CD4-positive, alpha-beta memory T cell (primary cell): ENCODE measurements at regions of chr1 and their contacts with region 1.

Region 1: DNA sequence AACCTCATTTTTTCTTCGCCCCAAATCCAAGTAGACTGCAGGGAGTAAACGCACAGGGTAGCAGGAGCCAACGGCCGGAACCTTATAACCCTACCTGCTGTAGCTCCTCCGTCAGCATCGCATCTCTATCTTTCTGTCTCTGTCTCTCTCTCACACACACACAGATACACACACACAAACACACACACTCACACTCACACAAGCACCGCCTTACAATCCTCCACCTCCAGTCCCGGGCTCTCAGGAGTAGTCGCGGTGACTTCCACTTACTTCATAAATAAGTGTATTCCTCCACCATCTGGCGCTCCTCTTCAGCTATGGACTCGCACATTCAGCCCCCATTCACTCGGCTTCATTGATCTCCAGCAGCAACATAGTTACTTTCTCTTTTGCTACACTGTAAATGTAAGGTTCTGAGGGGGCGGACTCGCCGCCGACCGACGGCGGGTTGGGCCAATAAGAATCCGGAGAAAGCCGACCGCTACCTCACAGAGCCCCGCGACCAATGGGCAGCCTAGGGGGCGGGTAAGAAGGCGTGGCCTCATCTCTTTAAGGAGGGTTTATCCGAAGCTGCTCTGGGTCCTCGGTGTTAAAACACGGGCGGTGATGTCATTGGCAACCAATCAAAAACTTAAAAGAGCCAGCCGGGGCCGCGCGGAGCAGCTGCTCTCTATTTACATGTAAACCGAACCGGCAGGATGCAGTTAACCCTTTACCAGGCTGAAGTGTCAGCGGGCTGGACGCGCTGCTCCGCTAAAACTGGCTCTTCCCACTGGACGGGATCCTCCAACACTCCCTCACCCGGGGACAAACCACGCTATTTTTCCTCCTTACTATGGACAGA is at the start of gene DUSP10:
- DNase-seq: peak; percentile 97 to 100 (median 100)
- H3K4me3 ChIP-seq: peak within 1 kb of the TSS; percentile 95 to 96
- H3K4me3 Mint-ChIP-seq: peak within 1 kb of the TSS in 3 of 8 donors; percentile 79 to 87 (median 86)
- H3K27ac ChIP-seq: peak within 1 kb of the TSS; percentile 98
- H3K27ac Mint-ChIP-seq: peak within 1 kb of the TSS in 4 of 7 donors; percentile 72 to 98 (median 92)
- H3K4me1 ChIP-seq: peaks cover 38% of the 10 kb centered on the region
- H3K4me1 Mint-ChIP-seq: peaks cover 0 to 36% (median 17%) of the 10 kb centered on the region in 4 donors
- H3K27me3 ChIP-seq: no peaks in the 10 kb centered on the region
- H3K27me3 Mint-ChIP-seq: no peaks in the 10 kb centered on the region
- total RNA-seq, gene DUSP10: 3.8 to 4.1 TPM

Region 2: GRCh38 chr1:221187174-221187573 is 554.8 kb before region 1 on chr1:
- CTCF ChIA-PET with region 1: no interaction called
- POLR2A ChIA-PET with region 1: no interaction called
- intact Hi-C with region 1: no loop called
- DNase-seq: no peak
- H3K4me3 ChIP-seq: no peak overlapping the region
- H3K4me3 Mint-ChIP-seq: no peak overlapping the region
- H3K27ac ChIP-seq: no peak overlapping the region
- H3K27ac Mint-ChIP-seq: no peak overlapping the region
- H3K4me1 ChIP-seq: no peaks in the 10 kb centered on the region
- H3K4me1 Mint-ChIP-seq: no peaks in the 10 kb centered on the region
- H3K27me3 ChIP-seq: no peaks in the 10 kb centered on the region
- H3K27me3 Mint-ChIP-seq: peaks cover 1 to 3% of the 10 kb centered on the region in 2 donors

Region 3: DNA sequence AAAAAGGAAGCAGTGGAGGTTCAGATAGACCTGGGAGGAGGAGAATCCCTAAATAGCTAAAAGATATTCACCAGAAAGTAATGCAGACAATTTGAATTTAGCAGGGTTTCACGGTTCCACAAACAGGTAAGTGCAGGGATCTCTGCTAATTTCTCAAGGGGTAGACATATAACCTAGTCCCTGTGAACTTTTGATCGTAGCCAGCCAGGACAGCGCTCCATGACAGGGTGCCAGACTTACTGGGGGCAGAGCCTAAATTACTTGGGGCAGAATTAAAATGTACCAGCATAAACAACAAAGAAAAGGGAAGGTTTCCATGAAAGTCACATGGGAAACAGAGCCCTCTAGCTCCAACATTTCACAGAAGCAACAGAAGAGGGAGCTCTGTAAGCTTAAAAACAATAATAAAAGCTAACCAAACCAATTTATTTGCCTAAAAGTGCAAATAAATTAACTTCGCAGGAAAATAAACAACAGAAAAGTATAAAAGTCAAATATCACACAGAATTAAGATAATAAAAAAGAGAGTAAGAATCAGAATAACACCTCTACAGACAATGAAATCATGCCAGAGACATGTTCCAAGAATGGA is 198.3 kb before region 1 on chr1:
- CTCF ChIA-PET with region 1: interaction called, 10 read pairs
- POLR2A ChIA-PET with region 1: no interaction called
- intact Hi-C with region 1: loop called (anchors 5 kb)
- DNase-seq: no peak
- H3K4me3 ChIP-seq: no peak overlapping the region
- H3K4me3 Mint-ChIP-seq: no peak overlapping the region
- H3K27ac ChIP-seq: no peak overlapping the region
- H3K27ac Mint-ChIP-seq: no peak overlapping the region
- H3K4me1 ChIP-seq: no peaks in the 10 kb centered on the region
- H3K4me1 Mint-ChIP-seq: no peaks in the 10 kb centered on the region
- H3K27me3 ChIP-seq: no peaks in the 10 kb centered on the region
- H3K27me3 Mint-ChIP-seq: peaks cover 1 to 14% of the 10 kb centered on the region in 2 donors

Region 4: DNA sequence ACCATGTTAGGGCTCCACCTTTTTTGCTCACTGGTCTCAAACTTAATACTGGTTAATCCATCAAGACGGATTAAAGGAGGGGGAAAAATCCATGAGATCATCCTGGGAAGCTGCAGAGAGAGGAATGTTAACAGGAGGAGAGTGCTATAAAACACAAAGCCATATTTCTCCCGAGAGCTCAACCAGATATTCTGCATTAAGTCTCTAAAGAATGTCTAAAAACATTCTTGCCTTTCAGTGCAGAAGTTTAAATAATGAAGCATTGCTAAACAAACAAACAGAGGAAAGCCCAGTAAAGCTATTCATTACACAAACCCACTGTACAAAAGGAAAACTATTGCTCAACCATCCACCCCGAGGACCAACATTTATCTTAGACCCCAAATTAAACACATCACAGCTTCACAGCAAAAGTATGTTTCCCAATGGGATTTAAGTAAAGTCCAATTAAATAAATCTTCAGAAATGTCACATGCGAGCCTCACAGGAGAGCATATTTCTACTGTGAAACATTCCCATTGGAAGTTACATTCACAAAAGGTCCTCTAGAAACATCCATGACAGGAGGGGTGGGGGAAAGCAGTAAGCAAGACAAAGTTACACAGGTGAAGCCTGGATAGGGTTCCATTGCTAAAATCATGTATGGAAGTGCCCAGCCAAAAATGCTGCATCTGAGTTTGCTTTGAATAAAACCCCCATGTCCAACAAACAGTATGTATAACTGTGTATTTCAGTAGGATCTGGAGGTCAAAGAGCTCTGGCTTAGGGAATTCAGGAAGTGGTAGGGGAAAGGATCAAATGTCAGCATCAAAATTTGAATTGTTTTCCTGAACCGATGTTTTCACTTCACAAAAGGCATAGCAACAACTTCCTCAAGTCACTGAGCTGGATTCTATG is 23.3 kb before region 1 on chr1:
- CTCF ChIA-PET with region 1: interaction called, 18 read pairs
- POLR2A ChIA-PET with region 1: interaction called, 192 read pairs
- intact Hi-C with region 1: loop called (anchors 1 kb)
- DNase-seq: no peak
- H3K4me3 ChIP-seq: no peak overlapping the region
- H3K4me3 Mint-ChIP-seq: no peak overlapping the region
- H3K27ac ChIP-seq: no peak overlapping the region
- H3K27ac Mint-ChIP-seq: peak overlapping the region in 1 of 7 donors; percentile 54
- H3K4me1 ChIP-seq: peaks cover 39% of the 10 kb centered on the region
- H3K4me1 Mint-ChIP-seq: peaks cover 18 to 54% (median 40%) of the 10 kb centered on the region in 4 donors
- H3K27me3 ChIP-seq: no peaks in the 10 kb centered on the region
- H3K27me3 Mint-ChIP-seq: no peaks in the 10 kb centered on the region

Region 5: DNA sequence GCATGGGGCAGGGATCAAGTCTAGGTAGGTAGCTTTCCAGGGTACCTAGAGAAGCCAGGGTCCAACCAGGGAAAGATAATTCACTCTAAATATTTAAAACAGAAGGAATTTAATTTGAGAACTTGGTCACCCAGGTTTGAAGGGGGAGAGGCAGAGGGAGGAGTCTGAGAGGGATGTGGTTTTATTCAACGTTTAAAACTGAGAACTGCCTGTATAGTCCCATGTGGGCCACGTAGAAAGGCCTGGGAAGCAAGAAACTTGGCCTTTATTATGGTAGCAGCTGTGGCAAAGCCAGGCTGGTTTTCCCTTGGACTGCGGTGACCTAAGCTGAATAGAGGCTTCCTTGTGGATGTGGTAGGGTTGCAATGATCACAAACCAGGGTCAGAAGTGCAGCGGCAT is 42.0 kb after region 1 on chr1:
- CTCF ChIA-PET with region 1: interaction called, 14 read pairs
- POLR2A ChIA-PET with region 1: interaction called, 71 read pairs
- intact Hi-C with region 1: loop called (anchors 2 kb)
- DNase-seq: peak in 4 of 5 donors; percentile 31 to 50 (median 40)
- H3K4me3 ChIP-seq: peak overlapping the region; percentile 15 to 29
- H3K4me3 Mint-ChIP-seq: peak overlapping the region in 7 of 8 donors; percentile 18 to 84 (median 73)
- H3K27ac ChIP-seq: no peak overlapping the region
- H3K27ac Mint-ChIP-seq: peak overlapping the region in 6 of 7 donors; percentile 13 to 69 (median 60)
- H3K4me1 ChIP-seq: peaks cover 45% of the 10 kb centered on the region
- H3K4me1 Mint-ChIP-seq: peaks cover 35 to 58% (median 46%) of the 10 kb centered on the region in 4 donors
- H3K27me3 ChIP-seq: no peaks in the 10 kb centered on the region
- H3K27me3 Mint-ChIP-seq: no peaks in the 10 kb centered on the region

Region 6: GRCh38 chr1:221923929-221924598 is 182.1 kb after region 1 on chr1:
- CTCF ChIA-PET with region 1: no interaction called
- POLR2A ChIA-PET with region 1: no interaction called
- intact Hi-C with region 1: no loop called
- DNase-seq: no peak
- H3K4me3 ChIP-seq: no peak overlapping the region
- H3K4me3 Mint-ChIP-seq: no peak overlapping the region
- H3K27ac ChIP-seq: no peak overlapping the region
- H3K27ac Mint-ChIP-seq: no peak overlapping the region
- H3K4me1 ChIP-seq: no peaks in the 10 kb centered on the region
- H3K4me1 Mint-ChIP-seq: no peaks in the 10 kb centered on the region
- H3K27me3 ChIP-seq: no peaks in the 10 kb centered on the region
- H3K27me3 Mint-ChIP-seq: peaks cover 4% of the 10 kb centered on the region in 2 donors

Region 7: DNA sequence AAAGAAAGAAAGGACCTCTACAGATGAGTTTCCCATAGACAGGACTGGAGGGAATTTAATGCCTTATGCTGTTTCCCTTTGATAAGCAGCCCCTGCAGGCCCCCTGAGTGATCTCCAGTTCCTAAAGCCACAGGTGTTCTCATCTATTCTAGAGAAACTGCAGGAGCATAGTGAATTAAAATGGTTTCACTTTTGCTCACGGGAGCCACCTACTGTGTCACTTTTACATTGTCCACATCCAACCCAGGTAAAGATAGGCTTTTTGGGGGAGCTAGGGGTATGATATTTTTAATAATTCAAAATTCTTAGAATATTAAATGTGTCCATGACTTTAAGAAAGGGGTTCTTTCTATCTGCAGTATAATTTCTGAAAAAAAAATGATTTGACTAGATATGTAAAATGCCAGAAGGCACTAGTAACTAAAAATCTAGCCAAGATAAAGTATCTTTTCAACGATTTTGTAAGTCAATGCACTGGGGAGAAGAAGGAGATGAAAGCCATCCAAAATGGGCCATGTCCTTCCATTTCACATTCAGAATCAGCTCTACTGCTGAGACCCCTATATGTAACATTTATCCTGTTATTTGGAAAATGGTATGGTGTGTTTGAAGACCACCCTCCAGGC is 267.3 kb after region 1 on chr1:
- CTCF ChIA-PET with region 1: interaction called, 3 read pairs
- POLR2A ChIA-PET with region 1: no interaction called
- intact Hi-C with region 1: loop called (anchors 5 kb)
- DNase-seq: peak in 4 of 5 donors; percentile 17 to 26 (median 18)
- H3K4me3 ChIP-seq: no peak overlapping the region
- H3K4me3 Mint-ChIP-seq: peak overlapping the region in 2 of 8 donors; percentile 49 to 52
- H3K27ac ChIP-seq: no peak overlapping the region
- H3K27ac Mint-ChIP-seq: peak overlapping the region in 1 of 7 donors; percentile 19
- H3K4me1 ChIP-seq: no peaks in the 10 kb centered on the region
- H3K4me1 Mint-ChIP-seq: peaks cover 0 to 2% (median 0%) of the 10 kb centered on the region in 4 donors
- H3K27me3 ChIP-seq: no peaks in the 10 kb centered on the region
- H3K27me3 Mint-ChIP-seq: peaks cover 0 to 2% of the 10 kb centered on the region in 2 donors

Region 8: GRCh38 chr1:222643938-222644635 is 902.2 kb after region 1 on chr1:
- CTCF ChIA-PET with region 1: no interaction called
- POLR2A ChIA-PET with region 1: interaction called, 4 read pairs
- intact Hi-C with region 1: loop called (anchors 5 kb)
- DNase-seq: peak; percentile 96 to 99 (median 97)
- H3K4me3 ChIP-seq: peak overlapping the region; percentile 94 to 100
- H3K4me3 Mint-ChIP-seq: peak overlapping the region; percentile 90 to 100 (median 100)
- H3K27ac ChIP-seq: peak overlapping the region; percentile 98
- H3K27ac Mint-ChIP-seq: peak overlapping the region; percentile 97 to 100 (median 99)
- H3K4me1 ChIP-seq: peaks cover 32% of the 10 kb centered on the region
- H3K4me1 Mint-ChIP-seq: peaks cover 16 to 36% (median 28%) of the 10 kb centered on the region in 4 donors
- H3K27me3 ChIP-seq: no peaks in the 10 kb centered on the region
- H3K27me3 Mint-ChIP-seq: no peaks in the 10 kb centered on the region